SK-N-SH (cell line): ENCODE measurements at regions of chr9 and their contacts with region 1.

Region 1: GRCh38 chr9:124593651-124594058 is 86.5 kb upstream of the NR5A1 start:
- DNase-seq: no peak
- H3K4me3 ChIP-seq: no peak overlapping the region
- H3K27ac ChIP-seq: no peak overlapping the region
- H3K4me1 ChIP-seq: peaks cover 8 to 19% of the 10 kb centered on the region in 2 experiments; a peak in 3 of 4 replicates
- H3K27me3 ChIP-seq: no peaks in the 10 kb centered on the region
- CTCF ChIP-seq: no peak
- EP300 ChIP-seq: no peak
- RAD21 ChIP-seq: no peak

Region 2: GRCh38 chr9:124503713-124504529 is 89.7 kb before region 1 on chr9:
- CTCF ChIA-PET with region 1: no interaction called
- POLR2A ChIA-PET with region 1: no interaction called
- DNase-seq: peak; percentile 62
- H3K4me3 ChIP-seq: no peak overlapping the region; a peak in 1 of 4 replicates
- H3K27ac ChIP-seq: no peak overlapping the region
- H3K4me1 ChIP-seq: no peaks in the 10 kb centered on the region; a peak in 1 of 4 replicates
- H3K27me3 ChIP-seq: peaks cover 51% of the 10 kb centered on the region
- CTCF ChIP-seq: no peak
- EP300 ChIP-seq: no peak
- RAD21 ChIP-seq: no peak

Region 3: GRCh38 chr9:124611106-124611505 is 17.5 kb after region 1 on chr9:
- CTCF ChIA-PET with region 1: interaction called, 45 read pairs
- POLR2A ChIA-PET with region 1: no interaction called
- DNase-seq: no peak
- H3K4me3 ChIP-seq: no peak overlapping the region
- H3K27ac ChIP-seq: no peak overlapping the region
- H3K4me1 ChIP-seq: 0 out of 4 replicates have a peak, but pooled peaks cover 0 to 6% of the 10 kb centered on the region in 2 experiments
- H3K27me3 ChIP-seq: no peaks in the 10 kb centered on the region
- CTCF ChIP-seq: no peak
- EP300 ChIP-seq: no peak
- RAD21 ChIP-seq: no peak